Activated CD8-positive, alpha-beta T cell treated with anti-CD3 and anti-CD28 coated beads, Interleukin-2, amount 10 ng/mL, durations not matched to agents 7 days and 5 days (primary cell): ENCODE measurements at regions of chr9 and their contacts with region 1.

Region 1: DNA sequence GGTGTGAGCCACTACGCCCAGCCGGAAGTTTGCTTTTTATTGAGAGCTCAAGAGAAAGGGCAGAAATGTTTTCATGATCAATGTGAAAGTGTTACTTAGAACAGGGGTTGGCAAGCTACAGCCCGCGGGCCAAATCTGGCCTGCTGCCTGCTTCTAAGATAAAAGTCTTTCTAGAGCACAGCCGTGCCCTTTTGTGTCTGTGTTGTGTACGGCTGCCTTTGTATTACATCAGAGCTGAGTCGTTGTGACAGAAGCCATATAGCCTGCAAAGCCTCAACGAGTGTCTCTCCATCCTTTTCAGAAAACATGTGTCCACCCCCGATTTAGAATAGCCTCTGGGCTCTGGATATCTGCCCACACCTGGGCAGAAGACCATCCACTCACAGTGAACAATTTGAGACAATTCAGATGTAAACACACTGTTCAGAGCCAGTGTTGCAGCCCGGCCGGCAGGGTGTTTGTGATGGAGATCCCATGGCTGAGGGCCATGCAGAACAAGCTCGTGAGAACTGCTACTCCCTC is 28.8 kb downstream of the AK8 start:
- DNase-seq: peak; percentile 31
- ATAC-seq: no peak
- H3K4me3 Mint-ChIP-seq: peak overlapping the region; percentile 56
- H3K27ac Mint-ChIP-seq: peak overlapping the region; percentile 88
- H3K4me1 Mint-ChIP-seq: peaks cover 33% of the 10 kb centered on the region
- H3K27me3 Mint-ChIP-seq: peaks cover 3% of the 10 kb centered on the region

Region 2: DNA sequence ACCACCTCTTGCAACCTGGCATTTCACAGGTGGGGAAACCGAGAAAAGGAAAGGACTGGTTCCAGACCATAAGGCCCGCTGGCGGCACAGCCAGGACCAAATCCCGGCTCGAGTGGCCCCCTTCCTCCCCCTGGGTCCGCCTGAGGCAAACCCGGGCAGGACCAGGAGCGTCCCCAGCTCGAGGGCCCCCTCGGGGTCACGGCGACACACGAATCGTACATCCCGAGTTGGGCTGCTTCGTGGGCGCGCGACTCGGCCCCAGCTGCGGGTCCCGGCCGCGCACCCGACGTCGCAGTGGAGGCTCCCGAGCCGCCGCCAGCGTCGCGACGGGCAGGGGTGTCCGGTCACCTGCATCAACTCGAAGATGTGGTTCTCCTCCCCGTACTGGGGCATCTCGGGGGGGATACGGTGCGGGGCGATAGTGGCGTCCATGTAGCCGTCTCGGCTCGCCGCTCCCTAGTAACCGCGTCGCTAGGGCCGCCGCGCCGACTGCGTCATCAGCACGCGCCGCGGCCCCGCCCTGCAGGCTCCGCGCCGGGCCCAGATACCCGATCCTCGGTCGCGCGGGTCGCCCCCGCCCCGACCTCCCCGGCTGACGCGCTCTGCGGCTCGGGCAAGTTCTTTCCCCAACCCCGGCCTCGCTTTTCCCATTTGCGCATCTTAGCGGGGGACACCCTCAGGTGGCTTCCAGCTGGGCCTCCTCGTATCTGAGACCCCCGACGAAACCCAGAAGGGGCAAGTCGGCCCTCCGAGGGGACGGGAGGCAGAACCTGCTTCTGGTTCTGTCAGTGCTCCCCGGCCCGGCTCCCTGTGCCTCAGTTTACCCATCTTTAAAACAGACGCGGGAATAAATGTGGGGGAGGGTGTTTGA is 28.8 kb after region 1 on chr9 and contains the start of gene AK8:
- CTCF ChIA-PET with region 1: interaction called, 17 read pairs
- POLR2A ChIA-PET with region 1: interaction called, 9 read pairs
- DNase-seq: peak; percentile 78
- ATAC-seq: peak; percentile 82
- H3K4me3 Mint-ChIP-seq: peak within 1 kb of the TSS; percentile 80
- H3K27ac Mint-ChIP-seq: peak within 1 kb of the TSS; percentile 87
- H3K4me1 Mint-ChIP-seq: peaks cover 45% of the 10 kb centered on the region
- H3K27me3 Mint-ChIP-seq: peaks cover 5% of the 10 kb centered on the region
- total RNA-seq, gene AK8: 0.39 TPM in 1 of 2 experiments, not detected in the other